B cell (primary cell): ENCODE measurements at regions of chr7 and their contacts with region 1.

Region 1: DNA sequence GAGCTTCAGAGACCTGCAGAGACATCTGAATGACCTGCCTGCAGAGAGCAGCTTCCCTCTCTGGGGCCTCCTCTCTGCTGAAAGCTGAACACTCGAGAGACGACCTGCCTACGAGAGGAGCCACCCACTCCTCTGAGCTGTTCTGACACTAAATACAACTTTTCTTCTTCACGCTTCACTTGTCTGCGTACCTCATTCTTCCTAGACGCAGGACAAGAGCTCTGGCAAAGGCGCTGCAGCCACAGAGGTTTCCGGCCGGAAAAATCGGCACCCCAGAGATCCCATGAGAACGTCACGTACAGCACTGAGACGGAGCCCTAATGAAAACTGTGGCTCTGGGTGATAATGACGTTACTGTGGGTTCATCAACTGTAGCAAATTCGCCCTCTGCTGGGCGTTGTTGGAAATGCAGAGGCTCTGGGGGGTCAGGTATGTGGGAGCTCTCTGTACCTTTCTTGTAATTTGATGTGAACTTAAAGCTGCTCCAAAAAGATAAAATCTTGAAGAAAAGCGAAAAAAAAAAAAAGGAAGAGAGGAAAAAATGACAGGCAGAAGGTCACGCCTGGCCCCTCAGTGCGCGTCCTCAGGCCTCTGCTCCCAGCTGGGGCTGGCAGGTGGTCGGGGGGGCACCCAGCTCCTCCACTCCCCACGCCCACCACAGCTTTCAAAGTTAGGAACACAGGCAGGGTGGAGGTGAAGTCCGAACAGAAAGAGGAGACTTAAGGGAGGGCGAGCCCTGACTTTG is 120.7 kb downstream of the DYNC2I1 start:
- DNase-seq: peak; percentile 88
- ATAC-seq: peak; percentile 90
- H3K4me3 ChIP-seq: peak overlapping the region; percentile 37 to 66 (median 45)
- H3K4me3 Mint-ChIP-seq: peak overlapping the region; percentile 94
- H3K27ac ChIP-seq: peak overlapping the region; percentile 3 to 59
- H3K27ac Mint-ChIP-seq: peak overlapping the region; percentile 78
- H3K4me1 ChIP-seq: peaks cover 12 to 18% of the 10 kb centered on the region in 2 donors
- H3K4me1 Mint-ChIP-seq: peaks cover 9% of the 10 kb centered on the region
- H3K27me3 ChIP-seq: no peaks in the 10 kb centered on the region
- H3K27me3 Mint-ChIP-seq: no peaks in the 10 kb centered on the region
- CTCF ChIP-seq: peak; percentile 91

Region 2: GRCh38 chr7:158695726-158696452 is 281.1 kb before region 1 on chr7:
- CTCF ChIA-PET with region 1: interaction called, 123 read pairs
- POLR2A ChIA-PET with region 1: no interaction called
- intact Hi-C with region 1: no loop called
- DNase-seq: peak; percentile 83
- ATAC-seq: peak; percentile 97
- H3K4me3 ChIP-seq: peak overlapping the region in 1 of 5 experiments; percentile 31
- H3K4me3 Mint-ChIP-seq: peak overlapping the region; percentile 26
- H3K27ac ChIP-seq: no peak overlapping the region
- H3K27ac Mint-ChIP-seq: peak overlapping the region; percentile 15
- H3K4me1 ChIP-seq: peaks cover 0 to 7% of the 10 kb centered on the region in 2 donors
- H3K4me1 Mint-ChIP-seq: peaks cover 8% of the 10 kb centered on the region
- H3K27me3 ChIP-seq: no peaks in the 10 kb centered on the region
- H3K27me3 Mint-ChIP-seq: no peaks in the 10 kb centered on the region
- CTCF ChIP-seq: peak; percentile 66

Region 3: DNA sequence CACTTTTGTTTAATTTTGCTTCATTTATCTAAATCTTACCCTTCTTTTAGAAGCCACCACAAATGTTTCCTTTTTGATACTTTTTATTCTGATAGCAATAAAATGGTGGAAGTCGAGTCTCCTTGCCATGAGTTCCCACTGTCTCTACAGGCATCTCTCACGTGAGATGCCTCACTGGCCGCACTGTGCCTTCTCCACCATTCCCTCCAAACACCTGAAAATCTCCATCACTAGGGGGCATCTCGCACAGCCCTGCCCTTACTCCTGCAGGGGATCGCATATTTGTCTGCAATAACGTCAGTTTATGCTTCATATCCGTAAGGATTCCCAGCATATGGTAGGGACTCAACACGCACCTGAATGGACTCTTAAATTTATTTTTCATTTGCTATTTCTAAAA is 216.1 kb before region 1 on chr7:
- CTCF ChIA-PET with region 1: interaction called, 5 read pairs
- POLR2A ChIA-PET with region 1: no interaction called
- intact Hi-C with region 1: loop called (anchors 10 kb)
- DNase-seq: no peak
- ATAC-seq: no peak
- H3K4me3 ChIP-seq: no peak overlapping the region
- H3K4me3 Mint-ChIP-seq: no peak overlapping the region
- H3K27ac ChIP-seq: no peak overlapping the region
- H3K27ac Mint-ChIP-seq: no peak overlapping the region
- H3K4me1 ChIP-seq: no peaks in the 10 kb centered on the region
- H3K4me1 Mint-ChIP-seq: no peaks in the 10 kb centered on the region
- H3K27me3 ChIP-seq: no peaks in the 10 kb centered on the region
- H3K27me3 Mint-ChIP-seq: no peaks in the 10 kb centered on the region
- CTCF ChIP-seq: no peak

Region 4: DNA sequence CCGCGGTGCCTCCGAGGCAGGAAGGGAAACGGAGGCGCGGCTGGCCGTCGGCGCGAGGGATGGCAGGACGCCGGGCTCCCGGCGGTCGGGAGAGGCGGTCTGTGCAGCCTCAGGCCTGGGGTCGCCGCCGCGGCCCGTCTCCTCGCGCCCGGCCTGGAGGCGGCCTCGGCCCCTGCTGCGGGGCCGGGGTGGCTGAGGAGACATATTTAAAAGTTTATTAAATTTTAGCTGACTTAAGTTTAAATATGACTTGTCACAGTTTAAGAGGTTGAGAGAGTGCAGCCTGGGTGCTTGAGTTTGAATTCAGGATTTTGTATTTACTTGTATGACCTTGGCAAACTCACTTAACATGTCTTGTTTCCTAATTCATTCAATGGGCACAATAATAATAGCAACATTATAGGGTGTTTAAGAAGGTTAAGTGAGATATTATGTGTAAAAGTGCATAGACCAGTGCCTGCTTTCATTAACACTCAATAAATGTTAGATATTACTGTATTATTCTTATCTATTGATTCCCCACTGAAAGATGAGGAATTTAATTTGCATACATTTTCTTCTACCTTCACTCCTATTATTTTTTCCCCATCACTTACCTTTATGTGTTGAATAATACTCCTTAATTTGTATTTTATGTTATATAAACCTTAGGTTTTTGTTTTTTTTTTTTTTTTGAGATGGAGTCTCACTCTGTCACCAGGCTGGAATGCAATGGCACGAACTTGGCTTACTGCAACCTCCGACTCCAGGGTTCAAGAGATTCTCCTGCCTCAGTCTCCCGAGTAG is 119.9 kb before region 1 on chr7:
- CTCF ChIA-PET with region 1: interaction called, 8 read pairs
- POLR2A ChIA-PET with region 1: no interaction called
- intact Hi-C with region 1: loop called (anchors 2 kb)
- DNase-seq: no peak
- ATAC-seq: no peak
- H3K4me3 ChIP-seq: peak overlapping the region in 4 of 5 experiments; percentile 56 to 72 (median 68)
- H3K4me3 Mint-ChIP-seq: peak overlapping the region; percentile 97
- H3K27ac ChIP-seq: peak overlapping the region; percentile 34 to 85
- H3K27ac Mint-ChIP-seq: peak overlapping the region; percentile 59
- H3K4me1 ChIP-seq: peaks cover 4 to 5% of the 10 kb centered on the region in 2 donors
- H3K4me1 Mint-ChIP-seq: peaks cover 13% of the 10 kb centered on the region
- H3K27me3 ChIP-seq: peaks cover 0 to 3% (median 0%) of the 10 kb centered on the region in 4 experiments
- H3K27me3 Mint-ChIP-seq: no peaks in the 10 kb centered on the region
- CTCF ChIP-seq: no peak

Region 5: DNA sequence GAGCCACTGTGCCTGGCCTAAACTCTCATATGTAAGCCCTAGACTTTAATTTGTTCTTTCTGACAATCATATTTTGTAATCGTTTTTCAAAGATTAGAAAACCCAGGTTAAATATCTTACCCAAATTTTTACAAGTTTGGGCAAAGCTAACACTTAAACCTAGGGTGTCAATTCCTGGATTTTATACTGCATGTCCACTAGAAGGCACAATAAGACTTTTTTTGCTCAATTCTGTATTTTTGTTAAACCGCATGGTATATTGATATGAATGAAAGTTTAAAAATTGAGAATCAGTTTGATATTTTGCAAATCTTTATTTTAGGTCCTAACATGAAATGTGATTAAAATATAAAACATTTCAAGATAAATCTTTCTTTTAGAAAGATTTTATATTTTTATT is 91.4 kb before region 1 on chr7:
- CTCF ChIA-PET with region 1: interaction called, 13 read pairs
- POLR2A ChIA-PET with region 1: no interaction called
- intact Hi-C with region 1: no loop called
- DNase-seq: no peak
- ATAC-seq: no peak
- H3K4me3 ChIP-seq: no peak overlapping the region
- H3K4me3 Mint-ChIP-seq: no peak overlapping the region
- H3K27ac ChIP-seq: no peak overlapping the region
- H3K27ac Mint-ChIP-seq: no peak overlapping the region
- H3K4me1 ChIP-seq: no peaks in the 10 kb centered on the region
- H3K4me1 Mint-ChIP-seq: no peaks in the 10 kb centered on the region
- H3K27me3 ChIP-seq: no peaks in the 10 kb centered on the region
- H3K27me3 Mint-ChIP-seq: no peaks in the 10 kb centered on the region
- CTCF ChIP-seq: no peak